ENCODE measurements at regions of chr6 and their contacts with region 1.

Region 1: GRCh38 chr6:127420556-127420955 is 38.6 kb downstream of the KIAA0408 start:
- DNase-seq: peak; percentile 92
- H3K4me3 Mint-ChIP-seq: no peak overlapping the region
- H3K27ac Mint-ChIP-seq: peak overlapping the region; percentile 68
- H3K4me1 Mint-ChIP-seq: peaks cover 26% of the 10 kb centered on the region
- H3K27me3 Mint-ChIP-seq: no peaks in the 10 kb centered on the region

Region 2: GRCh38 chr6:125804264-125804663 is 1616.3 kb before region 1 on chr6:
- CTCF ChIA-PET with region 1: no interaction called
- intact Hi-C with region 1: loop called (anchors 10 kb)
- DNase-seq: peak; percentile 67
- H3K4me3 Mint-ChIP-seq: no peak overlapping the region
- H3K27ac Mint-ChIP-seq: no peak overlapping the region
- H3K4me1 Mint-ChIP-seq: peaks cover 63% of the 10 kb centered on the region
- H3K27me3 Mint-ChIP-seq: no peaks in the 10 kb centered on the region

Region 3: DNA sequence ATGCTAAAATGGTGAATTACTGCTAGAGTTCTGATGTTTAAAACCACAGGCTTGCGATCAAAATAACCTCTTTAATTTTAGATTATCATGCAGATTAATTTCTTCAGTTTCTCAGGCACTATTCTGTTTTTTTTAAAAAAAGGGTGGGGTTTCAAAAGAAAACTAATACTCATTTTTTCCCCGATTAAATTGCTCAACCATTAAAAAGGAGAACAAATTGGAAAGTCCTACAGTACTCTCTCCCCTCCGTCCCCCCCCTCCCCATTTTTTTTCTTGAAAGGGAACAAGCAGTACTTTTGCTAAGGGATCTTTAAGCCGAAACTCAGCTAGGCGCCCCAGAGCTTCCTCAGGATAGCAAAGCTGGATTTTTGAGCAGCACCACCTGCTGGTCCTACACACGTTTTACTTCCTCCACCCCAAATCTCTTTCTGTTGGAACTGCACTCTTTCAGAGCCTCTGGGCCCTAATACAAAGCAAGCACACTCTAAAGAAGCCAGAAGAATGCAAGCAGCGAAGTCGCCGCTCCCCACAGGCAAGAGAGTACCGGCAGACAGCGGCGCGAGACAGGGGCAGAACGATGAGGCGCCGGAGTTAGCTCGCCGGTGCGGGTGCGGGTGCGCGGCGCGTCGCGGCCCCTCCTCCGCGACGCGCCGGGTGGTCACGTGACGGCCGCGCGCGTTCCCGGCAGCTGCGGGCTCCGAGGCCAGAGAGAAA is 154.2 kb before region 1 on chr6 and contains the start of gene RNF146:
- CTCF ChIA-PET with region 1: no interaction called
- intact Hi-C with region 1: loop called (anchors 1 kb)
- DNase-seq: peak; percentile 74
- H3K4me3 Mint-ChIP-seq: peak within 1 kb of the TSS; percentile 100
- H3K27ac Mint-ChIP-seq: peak within 1 kb of the TSS; percentile 100
- H3K4me1 Mint-ChIP-seq: peaks cover 25% of the 10 kb centered on the region
- H3K27me3 Mint-ChIP-seq: no peaks in the 10 kb centered on the region
- total RNA-seq, gene RNF146: 9.7 to 10.8 TPM

Region 4: GRCh38 chr6:127342946-127343808 is 77.4 kb before region 1 on chr6 and contains the start of gene ECHDC1:
- CTCF ChIA-PET with region 1: no interaction called
- intact Hi-C with region 1: loop called (anchors 1 kb)
- DNase-seq: peak; percentile 81
- H3K4me3 Mint-ChIP-seq: no peak within 1 kb of the TSS
- H3K27ac Mint-ChIP-seq: no peak within 1 kb of the TSS
- H3K4me1 Mint-ChIP-seq: peaks cover 13% of the 10 kb centered on the region
- H3K27me3 Mint-ChIP-seq: no peaks in the 10 kb centered on the region
- total RNA-seq, gene ECHDC1: 40.1 to 41.4 TPM

Region 5: GRCh38 chr6:127516666-127517273 is 96.2 kb after region 1 on chr6:
- CTCF ChIA-PET with region 1: interaction called, 4 read pairs
- intact Hi-C with region 1: loop called (anchors 1 kb)
- DNase-seq: peak; percentile 66
- H3K4me3 Mint-ChIP-seq: peak overlapping the region; percentile 85
- H3K27ac Mint-ChIP-seq: peak overlapping the region; percentile 68
- H3K4me1 Mint-ChIP-seq: peaks cover 30% of the 10 kb centered on the region
- H3K27me3 Mint-ChIP-seq: peaks cover 33% of the 10 kb centered on the region

Region 6: GRCh38 chr6:127582777-127583462 is 162.4 kb after region 1 on chr6:
- CTCF ChIA-PET with region 1: no interaction called
- intact Hi-C with region 1: no loop called
- DNase-seq: no peak
- H3K4me3 Mint-ChIP-seq: no peak overlapping the region
- H3K27ac Mint-ChIP-seq: no peak overlapping the region
- H3K4me1 Mint-ChIP-seq: peaks cover 1% of the 10 kb centered on the region
- H3K27me3 Mint-ChIP-seq: peaks cover 4% of the 10 kb centered on the region

Region 7: DNA sequence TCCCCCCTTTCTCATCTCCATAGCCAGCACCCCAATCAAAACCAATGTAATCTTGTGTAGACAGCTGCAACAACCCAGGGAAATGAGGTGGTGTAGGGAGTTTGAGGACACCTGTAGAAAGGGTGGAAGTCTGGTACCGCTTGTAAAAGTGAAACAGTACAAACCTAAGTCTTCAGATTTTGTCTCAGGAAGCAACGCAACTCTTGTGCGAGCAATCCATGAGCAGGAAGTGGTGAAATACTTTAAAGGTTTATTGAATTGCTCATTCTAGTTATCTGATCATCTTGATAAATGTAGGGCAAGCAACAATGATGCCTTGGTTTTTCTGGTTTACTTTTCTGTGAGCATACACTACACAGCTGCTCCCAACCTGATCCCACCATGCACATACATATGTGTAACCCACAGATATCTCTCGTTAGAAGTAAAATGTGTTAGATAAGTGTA is 551.4 kb after region 1 on chr6:
- CTCF ChIA-PET with region 1: no interaction called
- intact Hi-C with region 1: loop called (anchors 1 kb)
- DNase-seq: peak; percentile 62
- H3K4me3 Mint-ChIP-seq: peak overlapping the region; percentile 72
- H3K27ac Mint-ChIP-seq: peak overlapping the region; percentile 88
- H3K4me1 Mint-ChIP-seq: peaks cover 63% of the 10 kb centered on the region
- H3K27me3 Mint-ChIP-seq: no peaks in the 10 kb centered on the region

Measured in activated naive CD4-positive, alpha-beta T cell treated with anti-CD3 and anti-CD28 coated beads for 36 hours (primary cell).